Left cardiac atrium (tissue), 4 donors: ENCODE measurements at regions of chr2 and their contacts with region 1.

Region 1: GRCh38 chr2:86134709-86135108 is 28.7 kb downstream of the PTCD3 start:
- DNase-seq: no peak
- ATAC-seq: no peak

Region 2: DNA sequence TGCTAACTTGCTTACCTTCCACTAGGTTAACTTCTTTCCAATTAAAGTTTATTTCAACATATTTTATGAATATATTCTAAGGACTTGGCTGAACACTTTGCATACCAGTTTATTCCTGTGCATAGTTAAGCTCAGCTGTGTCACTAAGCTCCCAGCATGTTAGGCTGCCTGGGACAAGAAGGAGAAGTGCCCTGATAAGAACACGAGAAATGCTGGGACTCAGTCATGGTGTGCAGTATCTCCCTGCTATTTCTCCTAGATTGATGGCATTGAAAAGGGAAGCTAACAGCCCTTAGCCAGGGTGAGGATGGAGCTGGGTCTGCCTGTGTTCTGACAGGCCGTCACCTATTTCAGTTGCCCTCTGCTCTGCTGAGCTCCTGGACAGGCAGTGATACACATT is 1418.1 kb before region 1 on chr2:
- intact Hi-C with region 1: no loop called
- DNase-seq: no peak
- ATAC-seq: no peak

Region 3: DNA sequence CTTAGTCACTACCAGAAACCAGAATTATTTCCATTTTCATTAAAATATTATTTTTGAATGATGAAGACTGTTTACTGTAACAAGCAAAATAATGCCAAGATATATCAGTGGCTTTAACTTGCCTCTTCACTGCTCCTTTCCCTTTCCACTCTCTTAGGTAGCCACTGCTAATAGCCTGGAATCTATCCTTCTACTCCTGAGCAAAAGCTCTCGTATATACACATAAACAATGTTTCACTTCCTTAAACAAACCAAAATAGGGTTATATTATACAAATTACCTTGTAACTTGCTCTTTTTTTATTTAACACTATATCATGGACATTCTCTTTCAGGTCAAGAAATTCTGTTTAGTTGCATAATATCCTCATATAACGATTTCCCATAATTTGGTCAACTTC is 39.7 kb after region 1 on chr2:
- intact Hi-C with region 1: loop called in 1 of 2 experiments (anchors 5 kb)
- DNase-seq: no peak
- ATAC-seq: no peak